Activated CD4-positive, alpha-beta memory T cell treated with anti-CD3 and anti-CD28 coated beads for 36 hours (primary cell): ENCODE measurements at regions of chr6 and their contacts with region 1.

Region 1: DNA sequence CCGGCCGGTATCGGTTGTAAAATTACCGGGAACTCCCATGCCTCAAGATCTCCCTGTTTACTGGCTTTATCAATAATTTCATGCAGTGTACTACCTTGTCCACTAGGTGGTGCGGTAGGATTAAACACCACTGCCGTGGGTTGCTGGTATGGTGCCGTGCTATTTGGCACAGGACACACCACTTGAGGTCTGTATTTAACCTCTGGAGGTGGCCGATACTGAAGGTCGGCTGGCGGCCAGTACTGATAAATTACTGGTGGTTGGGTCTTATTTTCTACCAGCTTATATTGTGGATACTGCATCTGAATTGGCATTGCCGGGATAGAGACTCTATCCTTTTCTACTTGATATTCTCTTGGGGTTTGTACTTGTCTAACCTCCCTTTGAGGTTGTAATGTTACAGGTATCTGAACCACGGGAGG is 14.3 kb upstream of the PTCRA start:
- DNase-seq: peak; percentile 78
- H3K4me3 Mint-ChIP-seq: no peak overlapping the region
- H3K27ac Mint-ChIP-seq: no peak overlapping the region
- H3K4me1 Mint-ChIP-seq: peaks cover 8% of the 10 kb centered on the region
- H3K27me3 Mint-ChIP-seq: no peaks in the 10 kb centered on the region

Region 2: GRCh38 chr6:42963855-42964605 is 62.5 kb after region 1 on chr6:
- CTCF ChIA-PET with region 1: no interaction called
- POLR2A ChIA-PET with region 1: no interaction called
- intact Hi-C with region 1: loop called (anchors 5 kb)
- DNase-seq: peak; percentile 63
- H3K4me3 Mint-ChIP-seq: no peak overlapping the region
- H3K27ac Mint-ChIP-seq: no peak overlapping the region
- H3K4me1 Mint-ChIP-seq: peaks cover 13% of the 10 kb centered on the region
- H3K27me3 Mint-ChIP-seq: no peaks in the 10 kb centered on the region

Region 3: DNA sequence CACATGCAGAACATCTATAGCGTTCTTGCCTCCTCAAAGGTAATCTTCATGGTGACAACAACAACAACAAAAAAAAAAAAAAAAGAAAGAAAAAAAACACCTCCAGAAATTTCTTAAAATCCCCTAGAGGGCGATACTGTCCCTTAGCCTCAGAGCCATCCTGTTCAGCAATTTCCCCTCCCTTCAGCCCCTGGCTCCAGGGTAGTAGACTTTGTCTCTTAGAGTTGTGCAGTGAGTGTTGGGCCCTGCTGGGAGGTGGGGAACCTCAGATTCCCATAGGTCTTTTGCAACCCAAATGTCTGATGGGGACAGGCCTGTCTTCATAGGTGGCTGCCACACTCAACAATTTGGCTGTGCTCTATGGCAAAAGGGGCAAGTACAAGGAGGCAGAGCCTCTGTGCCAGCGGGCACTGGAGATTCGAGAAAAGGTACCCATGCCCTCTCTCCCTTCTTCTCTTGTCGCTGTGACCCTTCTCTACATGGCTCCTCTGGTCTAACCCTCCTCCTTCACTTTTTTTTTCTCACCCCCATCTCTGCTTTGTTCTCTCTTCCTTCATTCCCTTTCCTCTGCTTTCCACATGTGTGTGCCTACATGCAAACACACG is 168.6 kb after region 1 on chr6:
- CTCF ChIA-PET with region 1: no interaction called
- POLR2A ChIA-PET with region 1: no interaction called
- intact Hi-C with region 1: no loop called
- DNase-seq: no peak
- H3K4me3 Mint-ChIP-seq: no peak overlapping the region
- H3K27ac Mint-ChIP-seq: no peak overlapping the region
- H3K4me1 Mint-ChIP-seq: no peaks in the 10 kb centered on the region
- H3K27me3 Mint-ChIP-seq: no peaks in the 10 kb centered on the region